K562 (cell line): ENCODE measurements at regions of chr12 and their contacts with region 1.

Region 1: DNA sequence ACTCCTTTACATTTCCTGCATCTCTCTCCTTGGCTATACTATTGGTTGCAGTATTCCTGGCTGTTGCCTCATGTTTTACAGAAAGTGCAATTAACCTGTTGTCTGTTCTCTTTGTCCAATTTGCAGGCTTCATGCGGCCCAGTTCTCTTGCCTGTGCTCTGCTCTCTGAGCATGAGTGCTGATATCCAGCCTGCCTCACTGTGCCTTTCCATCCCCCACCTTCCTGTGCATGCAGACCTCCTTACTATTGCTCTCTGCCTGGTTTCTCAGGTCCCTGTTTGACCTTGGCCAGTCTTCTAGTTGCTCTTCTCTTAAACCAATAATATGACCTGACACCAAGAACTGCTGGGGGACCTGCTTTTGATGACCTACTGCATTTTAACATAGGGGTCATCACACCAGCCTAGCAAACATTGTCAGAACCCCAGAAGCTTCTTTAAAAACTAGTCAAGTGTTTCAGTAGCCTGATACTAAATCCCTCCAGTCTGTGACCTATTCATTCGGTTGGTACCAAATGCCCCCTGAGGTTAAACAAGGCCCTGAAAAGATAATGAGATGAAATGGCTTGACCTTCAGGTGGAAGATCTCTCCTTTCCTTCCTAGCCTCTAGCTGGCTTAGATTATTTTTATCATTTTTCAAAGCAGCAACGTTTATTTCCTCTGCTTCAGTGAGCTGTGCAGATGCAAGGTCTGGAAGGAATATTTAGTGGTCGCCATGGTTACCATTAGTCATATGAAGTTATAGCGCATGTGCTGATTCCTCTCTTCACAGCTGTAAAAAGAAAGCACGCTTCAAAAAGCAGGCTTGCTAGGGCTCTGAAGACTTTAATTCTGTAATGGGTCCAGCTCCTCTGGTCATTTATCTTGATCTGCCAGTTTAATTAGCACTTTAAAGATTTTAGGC is 216.5 kb downstream of the PHLDA1 start:
- DNase-seq: peak in 1 of 4 experiments; percentile 13
- ATAC-seq: no peak
- H3K4me3 ChIP-seq: no peak overlapping the region
- H3K27ac ChIP-seq: no peak overlapping the region
- H3K4me1 ChIP-seq: no peaks in the 10 kb centered on the region; a peak in 1 of 5 replicates
- H3K27me3 ChIP-seq: 0 out of 5 replicates have a peak, but pooled peaks cover 0 to 4% of the 10 kb centered on the region in 2 experiments
- CTCF ChIP-seq: no peak
- EP300 ChIP-seq: no peak
- POLR2A ChIP-seq: no peak
- RAD21 ChIP-seq: no peak

Region 2: DNA sequence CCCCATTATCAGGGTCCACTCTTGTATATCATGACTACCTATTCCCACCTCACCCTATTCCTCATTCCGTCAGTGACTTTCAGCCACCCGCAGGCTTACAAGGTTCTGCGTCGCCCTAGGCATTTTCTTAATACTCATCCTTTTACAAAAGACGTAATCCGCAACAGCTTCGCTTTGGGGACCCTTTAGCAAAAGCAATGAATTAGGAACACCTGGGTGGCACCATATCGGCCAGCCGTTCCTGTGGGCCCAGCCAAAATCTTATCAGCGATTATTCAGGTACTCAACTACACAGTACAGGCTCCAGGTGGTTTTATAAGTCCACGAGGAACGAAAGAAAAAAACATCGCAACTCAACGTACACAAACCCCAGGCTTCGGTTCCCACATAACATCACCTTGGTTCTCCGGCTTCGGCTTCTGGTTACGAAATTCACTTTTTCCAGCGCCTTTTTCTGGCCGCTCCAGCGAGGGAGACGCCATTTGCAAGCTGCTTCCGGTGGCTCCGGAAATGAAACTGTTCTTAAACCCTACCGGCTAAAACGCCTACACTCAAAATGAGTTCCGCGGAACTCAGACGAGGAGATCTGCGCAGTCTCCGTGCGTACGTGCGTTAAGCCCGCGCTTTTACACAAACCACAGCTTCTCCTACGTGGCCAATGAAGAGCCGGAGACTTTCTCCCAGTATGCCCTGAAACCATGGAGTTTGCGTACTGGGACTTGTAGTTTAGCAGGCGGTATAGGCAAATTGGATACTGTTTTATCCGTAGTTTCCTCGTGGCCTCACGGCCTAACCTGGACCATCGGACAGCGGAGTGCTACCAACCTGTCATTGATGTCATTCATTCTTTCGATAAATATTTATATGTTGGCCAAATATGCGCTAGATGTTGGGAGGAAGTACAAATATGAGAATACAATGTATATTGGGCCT is 303.7 kb before region 1 on chr12 and contains the start of gene KRR1:
- CTCF ChIA-PET with region 1: no interaction called
- POLR2A ChIA-PET with region 1: no interaction called
- in situ Hi-C with region 1: no loop called
- intact Hi-C with region 1: no loop called
- DNase-seq: peak; percentile 78 to 97 (median 82)
- ATAC-seq: peak; percentile 99
- H3K4me3 ChIP-seq: peak within 1 kb of the TSS; percentile 84
- H3K27ac ChIP-seq: peak within 1 kb of the TSS; percentile 85
- H3K4me1 ChIP-seq: peaks cover 0 to 9% of the 10 kb centered on the region in 2 experiments; a peak in 1 of 5 replicates
- H3K27me3 ChIP-seq: no peaks in the 10 kb centered on the region
- CTCF ChIP-seq: peak in 1 of 3 experiments; percentile 2; a peak in 1 of 6 replicates
- EP300 ChIP-seq: peak; percentile 42; the same call in 1 of the 2 replicates
- POLR2A ChIP-seq: peak; percentile 91
- RAD21 ChIP-seq: 0 out of 4 replicates have a peak, but pooled peaks of 1 of the 2 experiments have one; percentile 11
- polyA plus RNA-seq, gene KRR1: 49.9 to 68.5 TPM

Region 3: DNA sequence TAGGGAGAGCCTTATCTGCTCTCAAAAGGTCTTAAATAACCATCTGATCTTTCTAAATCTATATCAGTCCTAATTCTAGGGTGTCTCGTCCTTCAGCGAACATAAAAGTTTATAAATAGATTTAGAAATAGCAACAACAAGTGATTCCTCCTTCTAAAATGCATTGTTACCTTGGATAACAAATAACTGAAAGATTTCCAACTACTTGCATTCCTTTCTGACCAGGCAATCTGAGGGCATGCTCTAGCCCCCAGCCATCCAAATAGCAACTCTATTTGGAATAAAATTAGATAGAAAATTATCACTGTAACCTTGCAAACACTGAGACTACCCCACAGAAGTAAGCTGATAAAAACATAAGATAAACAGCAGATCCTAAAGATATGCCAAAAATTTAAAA is 281.9 kb before region 1 on chr12:
- CTCF ChIA-PET with region 1: no interaction called
- POLR2A ChIA-PET with region 1: no interaction called
- in situ Hi-C with region 1: no loop called
- intact Hi-C with region 1: loop called (anchors 10 kb)
- DNase-seq: no peak
- ATAC-seq: no peak
- H3K4me3 ChIP-seq: no peak overlapping the region
- H3K27ac ChIP-seq: no peak overlapping the region
- H3K4me1 ChIP-seq: no peaks in the 10 kb centered on the region
- H3K27me3 ChIP-seq: no peaks in the 10 kb centered on the region
- CTCF ChIP-seq: no peak
- EP300 ChIP-seq: no peak
- POLR2A ChIP-seq: no peak
- RAD21 ChIP-seq: no peak